Aorta (tissue), 5 donors: ENCODE measurements at regions of chr22 and their contacts with region 1.

Region 1: DNA sequence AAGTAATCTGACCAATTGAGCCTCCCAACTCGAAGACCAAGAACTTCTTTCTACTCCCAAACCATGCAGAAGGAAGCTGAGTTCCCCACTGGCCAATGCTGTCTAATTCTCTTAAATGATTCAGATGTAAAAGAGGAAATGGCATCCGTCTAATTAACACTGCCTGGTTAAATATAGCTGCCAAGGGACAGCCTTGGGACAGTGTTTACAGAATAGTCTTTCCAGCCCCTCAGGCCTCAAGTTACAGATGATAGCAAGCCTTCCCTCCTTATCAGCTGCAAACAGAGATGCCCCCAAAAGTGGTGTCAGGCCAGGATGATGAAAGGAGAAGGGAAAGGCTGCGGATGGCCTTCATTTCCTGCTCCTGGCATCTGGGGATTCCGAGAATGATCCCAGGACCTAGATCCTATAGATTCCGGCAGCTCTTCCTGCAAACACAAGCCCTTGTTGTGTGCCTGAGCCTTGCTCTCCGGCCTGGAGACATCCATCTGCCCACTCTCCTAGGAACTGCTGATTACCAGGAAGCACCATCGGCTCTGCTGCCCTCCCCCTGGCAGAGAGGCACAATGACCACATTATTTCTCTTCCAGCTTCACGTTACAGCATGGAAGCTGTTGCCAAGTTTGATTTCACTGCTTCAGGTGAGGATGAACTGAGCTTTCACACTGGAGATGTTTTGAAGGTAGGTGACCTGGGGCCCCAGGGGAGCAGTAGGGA is 13.5 kb upstream of the TMA7B start:
- DNase-seq: no peak
- ATAC-seq: no peak
- H3K4me3 ChIP-seq: no peak overlapping the region
- H3K27ac ChIP-seq: no peak overlapping the region
- H3K4me1 ChIP-seq: no peaks in the 10 kb centered on the region
- H3K27me3 ChIP-seq: no peaks in the 10 kb centered on the region

Region 2: GRCh38 chr22:39960791-39961746 is 14.4 kb after region 1 on chr22:
- intact Hi-C with region 1: loop called in 1 of 2 experiments (anchors 1 kb)
- DNase-seq: no peak
- ATAC-seq: no peak
- H3K4me3 ChIP-seq: no peak overlapping the region
- H3K27ac ChIP-seq: no peak overlapping the region
- H3K4me1 ChIP-seq: no peaks in the 10 kb centered on the region
- H3K27me3 ChIP-seq: no peaks in the 10 kb centered on the region

Region 3: GRCh38 chr22:39985383-39986035 is 38.8 kb after region 1 on chr22:
- intact Hi-C with region 1: no loop called
- DNase-seq: no peak
- ATAC-seq: no peak
- H3K4me3 ChIP-seq: no peak overlapping the region
- H3K27ac ChIP-seq: no peak overlapping the region
- H3K4me1 ChIP-seq: no peaks in the 10 kb centered on the region
- H3K27me3 ChIP-seq: no peaks in the 10 kb centered on the region